A549 (cell line): ENCODE measurements at regions of chr1 and their contacts with region 1.

Region 1: GRCh38 chr1:206479183-206480125 is 9.2 kb downstream of the IKBKE start:
- DNase-seq: peak; percentile 74 to 91
- ATAC-seq: peak; percentile 70 to 86
- H3K4me3 ChIP-seq: no peak overlapping the region
- H3K27ac ChIP-seq: no peak overlapping the region
- H3K4me1 ChIP-seq: peaks cover 11% of the 10 kb centered on the region
- CTCF ChIP-seq: peak; percentile 80
- EP300 ChIP-seq: no peak
- POLR2A ChIP-seq: no peak
- RAD21 ChIP-seq: peak; percentile 72 to 75

Region 2: GRCh38 chr1:206461602-206462455 is 17.6 kb before region 1 on chr1:
- CTCF ChIA-PET with region 1: interaction called, 73 read pairs
- POLR2A ChIA-PET with region 1: no interaction called
- DNase-seq: peak; percentile 66 to 77
- ATAC-seq: peak; percentile 72 to 91
- H3K4me3 ChIP-seq: no peak overlapping the region
- H3K27ac ChIP-seq: no peak overlapping the region
- H3K4me1 ChIP-seq: peaks cover 12% of the 10 kb centered on the region; the same call in 2 of the 3 replicates
- CTCF ChIP-seq: peak; percentile 78
- EP300 ChIP-seq: no peak
- POLR2A ChIP-seq: no peak
- RAD21 ChIP-seq: peak; percentile 45 to 58

Region 3: GRCh38 chr1:206496131-206496793 is 16.8 kb after region 1 on chr1:
- CTCF ChIA-PET with region 1: interaction called, 61 read pairs
- POLR2A ChIA-PET with region 1: no interaction called
- DNase-seq: no peak
- ATAC-seq: no peak
- H3K4me3 ChIP-seq: no peak overlapping the region
- H3K27ac ChIP-seq: no peak overlapping the region
- H3K4me1 ChIP-seq: peaks cover 11% of the 10 kb centered on the region; the same call in 2 of the 3 replicates
- CTCF ChIP-seq: no peak
- EP300 ChIP-seq: no peak
- POLR2A ChIP-seq: no peak
- RAD21 ChIP-seq: no peak

Region 4: GRCh38 chr1:206590025-206590758 is 110.7 kb after region 1 on chr1:
- CTCF ChIA-PET with region 1: interaction called, 87 read pairs
- POLR2A ChIA-PET with region 1: no interaction called
- DNase-seq: no peak
- ATAC-seq: peak in 1 of 2 experiments; percentile 43; a peak in 1 of 6 replicates
- H3K4me3 ChIP-seq: no peak overlapping the region
- H3K27ac ChIP-seq: no peak overlapping the region
- H3K4me1 ChIP-seq: no peaks in the 10 kb centered on the region
- CTCF ChIP-seq: peak; percentile 32
- EP300 ChIP-seq: no peak
- POLR2A ChIP-seq: no peak
- RAD21 ChIP-seq: peak in 1 of 2 experiments; percentile 31; a peak in 2 of 5 replicates

Region 5: GRCh38 chr1:206814716-206815341 is 335.4 kb after region 1 on chr1:
- CTCF ChIA-PET with region 1: no interaction called
- POLR2A ChIA-PET with region 1: no interaction called
- DNase-seq: no peak
- ATAC-seq: no peak
- H3K4me3 ChIP-seq: no peak overlapping the region
- H3K27ac ChIP-seq: no peak overlapping the region
- H3K4me1 ChIP-seq: no peaks in the 10 kb centered on the region
- CTCF ChIP-seq: no peak
- EP300 ChIP-seq: no peak
- POLR2A ChIP-seq: no peak
- RAD21 ChIP-seq: no peak